K562 (cell line): ENCODE measurements at regions of chr16 and their contacts with region 1.

Region 1: GRCh38 chr16:67667817-67668494 is 1.3 kb downstream of the C16orf86 start:
- DNase-seq: peak; percentile 85 to 90 (median 86)
- ATAC-seq: peak; percentile 89
- H3K4me3 ChIP-seq: no peak overlapping the region
- H3K27ac ChIP-seq: no peak overlapping the region
- H3K4me1 ChIP-seq: peaks cover 14 to 39% of the 10 kb centered on the region in 2 experiments
- H3K27me3 ChIP-seq: no peaks in the 10 kb centered on the region
- CTCF ChIP-seq: peak; percentile 93 to 99 (median 96)
- EP300 ChIP-seq: no peak
- POLR2A ChIP-seq: no peak
- RAD21 ChIP-seq: peak; percentile 74 to 84

Region 2: GRCh38 chr16:67406111-67406890 is 261.7 kb before region 1 on chr16:
- CTCF ChIA-PET with region 1: no interaction called
- POLR2A ChIA-PET with region 1: no interaction called
- in situ Hi-C with region 1: no loop called
- intact Hi-C with region 1: no loop called
- DNase-seq: no peak
- ATAC-seq: no peak
- H3K4me3 ChIP-seq: no peak overlapping the region
- H3K27ac ChIP-seq: no peak overlapping the region
- H3K4me1 ChIP-seq: peaks cover 0 to 9% of the 10 kb centered on the region in 2 experiments; a peak in 2 of 5 replicates
- H3K27me3 ChIP-seq: peaks cover 26 to 62% of the 10 kb centered on the region in 2 experiments
- CTCF ChIP-seq: no peak
- EP300 ChIP-seq: no peak
- POLR2A ChIP-seq: no peak
- RAD21 ChIP-seq: no peak

Region 3: GRCh38 chr16:67490335-67491096 is 177.4 kb before region 1 on chr16:
- CTCF ChIA-PET with region 1: interaction called, 10 read pairs
- POLR2A ChIA-PET with region 1: interaction called, 3 read pairs
- in situ Hi-C with region 1: no loop called
- intact Hi-C with region 1: no loop called
- DNase-seq: no peak
- ATAC-seq: no peak
- H3K4me3 ChIP-seq: no peak overlapping the region
- H3K27ac ChIP-seq: no peak overlapping the region
- H3K4me1 ChIP-seq: peaks cover 0 to 3% of the 10 kb centered on the region in 2 experiments; a peak in 2 of 5 replicates
- H3K27me3 ChIP-seq: no peaks in the 10 kb centered on the region
- CTCF ChIP-seq: no peak
- EP300 ChIP-seq: no peak
- POLR2A ChIP-seq: no peak
- RAD21 ChIP-seq: no peak

Region 4: DNA sequence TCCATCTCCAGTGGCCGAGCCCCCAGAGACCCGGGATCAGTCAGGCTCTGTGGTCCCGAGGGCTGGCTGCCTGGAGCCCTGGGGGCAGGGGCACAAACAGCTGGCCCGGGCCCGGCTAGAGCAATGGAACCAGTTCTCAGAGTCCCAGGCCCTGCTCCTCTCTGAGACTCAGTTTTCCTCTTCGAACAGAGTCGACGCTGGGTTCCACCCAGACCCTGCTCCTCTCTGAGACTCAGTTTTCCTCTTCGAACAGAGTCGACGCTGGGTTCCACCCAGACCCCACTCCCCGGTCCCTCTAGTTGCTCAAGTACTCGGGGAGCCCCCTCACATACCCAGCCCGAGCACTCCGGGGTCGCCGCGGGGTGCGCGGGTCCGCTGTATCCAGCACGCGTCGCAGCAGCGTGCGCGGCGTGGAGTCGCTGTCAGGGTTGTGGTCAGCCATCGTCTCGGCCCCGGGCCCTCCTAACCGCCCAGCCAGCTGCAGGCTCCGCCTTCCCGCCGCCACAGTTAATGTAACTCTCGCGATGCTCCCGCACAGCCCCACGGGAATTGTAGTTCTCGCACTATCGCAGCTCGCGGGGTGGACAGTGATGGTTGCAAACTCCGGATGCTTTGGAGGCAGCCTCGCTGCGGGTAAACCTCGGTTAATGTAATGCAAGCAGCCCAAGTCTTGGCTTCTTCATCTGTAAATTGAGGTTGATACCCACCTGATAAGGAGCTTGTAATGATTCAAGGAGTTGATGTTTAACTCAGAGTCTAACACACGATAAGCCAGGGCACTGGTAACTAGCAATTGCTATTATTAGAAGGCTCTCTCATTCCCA is 165.7 kb after region 1 on chr16:
- CTCF ChIA-PET with region 1: no interaction called
- POLR2A ChIA-PET with region 1: no interaction called
- in situ Hi-C with region 1: no loop called
- intact Hi-C with region 1: no loop called
- DNase-seq: peak; percentile 95 to 97 (median 96)
- ATAC-seq: peak; percentile 100
- H3K4me3 ChIP-seq: peak overlapping the region; percentile 67
- H3K27ac ChIP-seq: peak overlapping the region; percentile 68
- H3K4me1 ChIP-seq: peaks cover 11 to 24% of the 10 kb centered on the region in 2 experiments; a peak in 4 of 5 replicates
- H3K27me3 ChIP-seq: no peaks in the 10 kb centered on the region
- CTCF ChIP-seq: no peak
- EP300 ChIP-seq: no peak
- POLR2A ChIP-seq: peak; percentile 90
- RAD21 ChIP-seq: no peak